BJ (cell line): ENCODE measurements at regions of chr14 and their contacts with region 1.

Region 1: DNA sequence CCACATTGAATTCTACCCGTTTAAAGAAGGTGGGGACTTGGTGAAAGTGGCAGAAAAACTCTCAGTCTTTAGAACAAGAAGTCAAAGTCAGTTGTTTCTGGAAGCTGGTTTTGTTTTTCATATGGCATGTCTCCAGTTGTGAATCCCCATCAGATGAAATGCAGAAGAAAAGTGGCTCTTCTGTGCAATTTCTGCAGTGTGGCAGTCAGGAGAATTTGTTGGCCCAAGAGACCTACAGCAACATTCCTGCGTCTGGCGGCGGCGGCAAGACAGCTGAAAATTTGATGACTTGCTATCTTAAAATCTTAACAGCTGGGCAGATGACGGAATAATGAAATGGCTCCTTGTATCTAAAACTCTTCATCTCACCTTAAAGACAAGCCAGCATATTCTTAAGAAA is 201.5 kb downstream of the FOXN3 start:
- DNase-seq: no peak
- H3K4me3 ChIP-seq: no peak overlapping the region
- H3K27me3 ChIP-seq: no peaks in the 10 kb centered on the region
- CTCF ChIP-seq: no peak

Region 2: DNA sequence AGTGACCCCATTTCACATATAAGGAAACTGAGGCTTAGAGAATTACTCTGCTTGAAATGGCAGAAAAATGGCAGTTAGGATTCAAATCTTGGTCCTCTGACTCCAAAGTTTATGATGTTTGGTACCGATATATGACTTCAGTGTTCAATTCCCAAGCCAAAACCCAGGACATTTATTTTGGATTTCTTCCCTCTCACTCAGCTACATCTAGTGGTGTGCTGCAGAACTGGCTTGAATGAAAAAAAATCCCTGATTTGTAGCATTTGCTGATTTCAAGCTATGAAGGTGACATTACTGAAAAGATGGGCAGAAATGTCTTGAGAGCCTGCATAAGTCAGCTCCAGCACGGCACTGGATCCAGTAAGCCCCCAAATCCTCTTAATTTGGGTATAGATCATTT is 632.6 kb after region 1 on chr14:
- CTCF ChIA-PET with region 1: no interaction called
- POLR2A ChIA-PET with region 1: interaction called, 13 read pairs
- DNase-seq: no peak
- H3K4me3 ChIP-seq: no peak overlapping the region
- H3K27me3 ChIP-seq: no peaks in the 10 kb centered on the region
- CTCF ChIP-seq: peak; percentile 34